Naive thymus-derived CD4-positive, alpha-beta T cell (primary cell): ENCODE measurements at regions of chr11 and their contacts with region 1.

Region 1: GRCh38 chr11:111707039-111707690 is 59.0 kb downstream of the PPP2R1B start:
- DNase-seq: no peak
- ATAC-seq: no peak
- H3K4me3 ChIP-seq: no peak overlapping the region
- H3K4me3 Mint-ChIP-seq: no peak overlapping the region
- H3K27ac ChIP-seq: no peak overlapping the region
- H3K27ac Mint-ChIP-seq: no peak overlapping the region
- H3K4me1 ChIP-seq: no peaks in the 10 kb centered on the region
- H3K4me1 Mint-ChIP-seq: no peaks in the 10 kb centered on the region
- H3K27me3 ChIP-seq: no peaks in the 10 kb centered on the region
- H3K27me3 Mint-ChIP-seq: no peaks in the 10 kb centered on the region

Region 2: DNA sequence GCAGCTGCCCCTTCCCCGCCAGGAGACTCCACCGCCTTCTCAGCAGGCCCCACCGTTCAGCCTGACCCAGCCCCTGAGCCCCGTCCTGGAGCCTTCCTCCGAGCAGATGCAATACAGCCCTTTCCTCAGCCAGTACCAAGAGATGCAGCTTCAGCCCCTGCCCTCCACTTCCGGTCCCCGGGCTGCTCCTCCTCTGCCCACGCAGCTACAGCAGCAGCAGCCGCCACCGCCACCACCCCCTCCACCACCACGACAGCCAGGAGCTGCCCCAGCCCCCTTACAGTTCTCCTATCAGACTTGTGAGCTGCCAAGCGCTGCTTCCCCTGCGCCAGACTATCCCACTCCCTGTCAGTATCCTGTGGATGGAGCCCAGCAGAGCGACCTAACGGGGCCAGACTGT is 16.4 kb after region 1 on chr11:
- CTCF ChIA-PET with region 1: interaction called, 4 read pairs
- POLR2A ChIA-PET with region 1: no interaction called
- intact Hi-C with region 1: loop called in 1 of 2 experiments (anchors 2 kb)
- DNase-seq: no peak
- ATAC-seq: no peak
- H3K4me3 ChIP-seq: no peak overlapping the region
- H3K4me3 Mint-ChIP-seq: no peak overlapping the region
- H3K27ac ChIP-seq: no peak overlapping the region
- H3K27ac Mint-ChIP-seq: no peak overlapping the region
- H3K4me1 ChIP-seq: no peaks in the 10 kb centered on the region
- H3K4me1 Mint-ChIP-seq: no peaks in the 10 kb centered on the region
- H3K27me3 ChIP-seq: no peaks in the 10 kb centered on the region
- H3K27me3 Mint-ChIP-seq: no peaks in the 10 kb centered on the region